ENCODE measurements at regions of chr20 and their contacts with region 1.

Region 1: GRCh38 chr20:49132995-49133478 is 55.1 kb downstream of the STAU1 start:
- DNase-seq: peak in 1 of 5 donors; percentile 35
- ATAC-seq: peak; percentile 58 to 81 (median 72)
- H3K4me3 ChIP-seq: no peak overlapping the region
- H3K27ac ChIP-seq: no peak overlapping the region
- H3K4me1 ChIP-seq: peaks cover 0 to 8% (median 0%) of the 10 kb centered on the region in 12 donors
- H3K27me3 ChIP-seq: no peaks in the 10 kb centered on the region
- CTCF ChIP-seq: peak; percentile 49 to 75 (median 60)
- POLR2A ChIP-seq: no peak

Region 2: GRCh38 chr20:49100972-49101371 is 32.1 kb before region 1 on chr20:
- intact Hi-C with region 1: no loop called
- DNase-seq: no peak
- ATAC-seq: no peak
- H3K4me3 ChIP-seq: no peak overlapping the region
- H3K27ac ChIP-seq: peak overlapping the region in 1 of 12 donors; percentile 35
- H3K4me1 ChIP-seq: peaks cover 0 to 16% (median 0%) of the 10 kb centered on the region in 12 donors
- H3K27me3 ChIP-seq: no peaks in the 10 kb centered on the region
- CTCF ChIP-seq: no peak
- POLR2A ChIP-seq: no peak

Region 3: DNA sequence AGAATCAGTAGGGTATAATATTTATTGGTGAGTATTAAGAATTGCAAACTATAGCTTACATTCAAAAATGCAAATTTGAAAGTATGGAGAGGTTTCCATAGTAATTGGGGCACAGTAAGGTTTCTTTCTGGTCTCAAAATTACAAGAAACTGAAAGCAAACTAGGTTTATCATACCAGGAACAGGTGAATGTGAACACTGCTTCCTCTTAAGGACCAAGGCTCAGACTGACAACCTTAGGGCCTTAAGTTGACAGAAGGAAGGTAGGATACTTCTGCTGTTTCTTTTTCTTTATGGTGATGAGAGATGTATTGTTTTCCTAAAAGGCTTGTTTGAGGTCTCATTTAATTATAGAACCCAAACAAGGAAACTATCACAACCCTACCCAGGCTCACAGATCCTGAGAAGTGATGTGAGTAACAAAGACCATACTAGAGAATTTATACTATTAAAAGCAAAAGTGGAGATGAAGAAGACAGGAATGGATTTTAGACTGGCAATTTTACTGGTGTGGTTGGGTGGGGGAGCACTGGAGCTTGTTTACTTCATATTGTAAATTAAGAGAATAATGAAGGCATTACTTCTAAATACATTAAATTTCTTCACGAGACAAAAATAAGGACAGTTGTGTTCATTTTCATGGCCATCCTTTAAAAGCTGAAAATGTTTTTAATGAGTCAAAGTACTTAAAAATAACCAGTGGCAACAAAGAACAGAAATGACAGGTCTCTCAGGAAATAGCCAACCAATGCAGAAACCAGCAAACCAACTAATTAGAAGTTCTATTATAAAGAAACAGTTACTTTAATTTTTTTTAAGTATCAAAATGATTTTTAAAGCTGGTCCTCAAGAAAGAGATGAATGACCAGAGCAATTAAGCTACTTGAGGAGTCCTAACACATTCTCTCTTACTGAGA is 33.8 kb after region 1 on chr20:
- intact Hi-C with region 1: loop called in 1 of 10 experiments (anchors 5 kb)
- DNase-seq: no peak
- ATAC-seq: no peak
- H3K4me3 ChIP-seq: peak overlapping the region in 2 of 12 donors; percentile 12 to 27
- H3K27ac ChIP-seq: peak overlapping the region in 10 of 12 donors; percentile 6 to 58 (median 44)
- H3K4me1 ChIP-seq: peaks cover 4 to 45% (median 23%) of the 10 kb centered on the region in 12 donors
- H3K27me3 ChIP-seq: no peaks in the 10 kb centered on the region
- CTCF ChIP-seq: no peak
- POLR2A ChIP-seq: no peak

Region 4: GRCh38 chr20:49219089-49219923 is 86.3 kb after region 1 on chr20 and contains the start of gene DDX27:
- intact Hi-C with region 1: loop called (anchors 1 to 2 kb)
- DNase-seq: peak; percentile 97 to 98 (median 97)
- ATAC-seq: peak; percentile 94 to 99 (median 98)
- H3K4me3 ChIP-seq: peak within 1 kb of the TSS; percentile 52 to 92 (median 82)
- H3K27ac ChIP-seq: peak within 1 kb of the TSS; percentile 74 to 98 (median 90)
- H3K4me1 ChIP-seq: peaks cover 0 to 29% (median 14%) of the 10 kb centered on the region in 12 donors
- H3K27me3 ChIP-seq: no peaks in the 10 kb centered on the region
- CTCF ChIP-seq: no peak
- POLR2A ChIP-seq: peak in 1 of 2 donors; percentile 74
- total RNA-seq, gene DDX27: 12.0 to 18.3 (median 13.4) TPM

Region 5: GRCh38 chr20:49794336-49795138 is 661.5 kb after region 1 on chr20:
- intact Hi-C with region 1: no loop called
- DNase-seq: no peak
- ATAC-seq: peak in 1 of 4 donors; percentile 31
- H3K4me3 ChIP-seq: no peak overlapping the region
- H3K27ac ChIP-seq: peak overlapping the region in 1 of 12 donors; percentile 58
- H3K4me1 ChIP-seq: peaks cover 0 to 31% (median 7%) of the 10 kb centered on the region in 12 donors
- H3K27me3 ChIP-seq: no peaks in the 10 kb centered on the region
- CTCF ChIP-seq: no peak
- POLR2A ChIP-seq: no peak

Measured in heart left ventricle (tissue), 16 donors.